ENCODE measurements at regions of chr1 and their contacts with region 1.

Region 1: DNA sequence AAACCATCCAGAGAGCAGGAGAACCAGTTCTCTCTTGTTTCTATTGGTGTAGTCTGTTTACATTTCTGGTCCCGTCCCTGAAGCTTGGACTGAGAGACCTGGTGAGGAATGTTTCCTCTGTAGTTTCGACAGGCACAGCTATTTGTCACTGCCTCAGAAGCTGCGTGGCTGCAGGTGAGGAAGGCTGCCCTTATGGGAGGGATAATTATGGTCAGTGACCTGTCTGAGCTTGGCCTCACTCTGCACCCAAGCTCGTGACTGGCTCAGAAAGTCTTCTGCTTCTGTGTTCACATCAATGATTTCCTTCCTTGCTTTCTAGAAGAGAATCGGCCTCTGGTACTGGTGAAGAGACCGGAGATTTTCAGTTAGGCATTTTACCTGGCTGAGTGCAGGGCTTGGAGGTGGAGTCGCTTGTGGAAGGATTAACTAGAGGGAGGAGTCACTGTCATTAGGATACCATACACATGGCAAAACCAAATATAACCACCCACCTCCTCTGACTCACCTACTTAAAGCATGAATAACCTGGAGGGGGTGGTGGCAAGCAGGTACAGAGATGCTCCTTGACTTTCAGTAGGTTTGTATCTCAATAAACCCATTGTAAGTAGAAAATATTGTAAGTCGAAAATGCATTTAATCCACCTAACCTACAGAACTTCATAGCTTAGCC is 19.9 kb upstream of the WDR26 start:
- DNase-seq: no peak
- H3K4me3 ChIP-seq: no peak overlapping the region
- H3K27ac ChIP-seq: no peak overlapping the region
- H3K4me1 ChIP-seq: peaks cover 21% of the 10 kb centered on the region
- H3K27me3 ChIP-seq: no peaks in the 10 kb centered on the region
- CTCF ChIP-seq: no peak
- POLR2A ChIP-seq: no peak

Region 2: DNA sequence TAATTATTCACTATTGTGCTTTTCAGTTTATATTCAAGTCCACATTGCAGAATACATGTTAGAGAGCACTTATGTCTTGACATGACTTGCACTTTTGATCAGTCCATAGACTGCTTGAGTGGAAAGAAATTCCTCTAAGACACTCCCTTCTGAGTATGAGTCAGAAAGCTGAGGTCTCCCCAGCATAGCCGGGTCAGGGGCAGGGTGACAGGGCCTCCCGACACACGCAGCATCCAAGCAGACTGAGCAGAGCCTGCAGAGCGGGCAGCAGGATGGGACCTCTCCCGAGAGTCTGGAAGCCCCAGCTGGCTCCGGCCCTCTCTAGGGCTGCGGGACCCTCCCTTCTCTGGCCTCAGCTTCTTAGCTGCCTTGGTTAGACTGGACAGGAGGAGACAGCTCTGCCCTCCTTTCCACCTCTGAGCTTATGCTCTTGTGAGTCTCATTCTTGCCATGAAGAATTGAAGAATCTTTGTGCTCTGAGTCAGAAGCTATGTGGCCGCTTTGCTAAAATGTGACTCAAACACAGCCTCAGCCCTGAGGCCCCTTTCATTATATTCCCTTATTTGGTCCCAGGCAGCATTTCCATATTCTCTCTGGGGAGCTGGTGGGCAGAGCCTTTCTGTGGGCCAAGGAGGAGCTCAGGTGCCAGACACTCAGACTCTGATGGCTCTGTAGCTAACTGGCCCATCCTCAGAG is 753.4 kb before region 1 on chr1:
- CTCF ChIA-PET with region 1: interaction called, 4 read pairs
- POLR2A ChIA-PET with region 1: no interaction called
- dilution Hi-C with region 1: no loop called
- intact Hi-C with region 1: loop called (anchors 1 kb)
- DNase-seq: peak; percentile 74
- H3K4me3 ChIP-seq: no peak overlapping the region
- H3K27ac ChIP-seq: peak overlapping the region; percentile 73
- H3K4me1 ChIP-seq: peaks cover 37% of the 10 kb centered on the region
- H3K27me3 ChIP-seq: no peaks in the 10 kb centered on the region
- CTCF ChIP-seq: no peak
- POLR2A ChIP-seq: peak; percentile 26

Region 3: DNA sequence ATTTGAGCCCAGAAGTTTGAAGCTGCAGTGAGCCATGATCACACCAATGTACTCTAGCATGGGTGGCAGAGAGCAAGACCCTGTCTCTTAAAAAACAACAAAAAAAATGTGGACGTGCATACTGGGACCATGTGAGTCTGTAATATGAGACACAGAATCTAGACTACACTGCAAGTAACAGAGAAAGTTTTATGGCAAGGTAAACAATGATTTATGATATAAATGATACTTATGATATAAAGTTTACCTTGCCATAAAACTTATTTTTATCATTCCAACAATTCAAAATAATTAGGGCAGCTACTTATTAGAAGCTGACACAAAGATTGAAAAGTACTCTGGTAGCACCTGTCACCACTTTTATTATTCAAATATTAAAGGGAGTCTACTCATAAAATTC is 54.6 kb before region 1 on chr1:
- CTCF ChIA-PET with region 1: interaction called, 14 read pairs
- POLR2A ChIA-PET with region 1: no interaction called
- dilution Hi-C with region 1: no loop called
- intact Hi-C with region 1: no loop called
- DNase-seq: no peak
- H3K4me3 ChIP-seq: no peak overlapping the region
- H3K27ac ChIP-seq: no peak overlapping the region
- H3K4me1 ChIP-seq: no peaks in the 10 kb centered on the region
- H3K27me3 ChIP-seq: no peaks in the 10 kb centered on the region
- CTCF ChIP-seq: no peak
- POLR2A ChIP-seq: no peak

Region 4: DNA sequence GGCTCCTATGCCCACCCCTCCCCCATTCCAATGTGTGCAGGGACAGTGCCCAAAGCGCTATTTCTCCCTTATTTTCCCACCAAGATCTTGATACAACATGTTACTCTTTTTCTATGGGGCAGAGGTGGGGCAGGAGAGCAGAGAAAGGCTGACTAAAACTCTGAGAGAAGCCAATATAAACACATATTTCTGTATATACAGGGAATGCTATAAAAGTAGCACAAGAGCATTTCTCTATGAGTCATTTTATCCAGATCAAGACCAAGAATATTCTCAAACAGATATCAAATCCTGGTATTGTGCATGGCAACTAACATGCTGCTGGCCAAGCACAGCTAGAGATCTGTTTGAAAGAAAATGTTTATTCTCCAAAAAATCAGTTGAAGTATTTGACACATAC is 27.2 kb before region 1 on chr1:
- CTCF ChIA-PET with region 1: interaction called, 92 read pairs
- POLR2A ChIA-PET with region 1: interaction called, 11 read pairs
- dilution Hi-C with region 1: no loop called
- intact Hi-C with region 1: loop called (anchors 1 kb)
- DNase-seq: peak; percentile 90
- H3K4me3 ChIP-seq: no peak overlapping the region
- H3K27ac ChIP-seq: peak overlapping the region; percentile 39
- H3K4me1 ChIP-seq: peaks cover 43% of the 10 kb centered on the region
- H3K27me3 ChIP-seq: no peaks in the 10 kb centered on the region
- CTCF ChIP-seq: no peak
- POLR2A ChIP-seq: no peak

Region 5: GRCh38 chr1:224497714-224498573 is 43.4 kb after region 1 on chr1:
- CTCF ChIA-PET with region 1: interaction called, 22 read pairs
- POLR2A ChIA-PET with region 1: no interaction called
- dilution Hi-C with region 1: no loop called
- intact Hi-C with region 1: loop called (anchors 1 kb)
- DNase-seq: peak; percentile 89
- H3K4me3 ChIP-seq: peak overlapping the region in 1 of 3 experiments; percentile 20
- H3K27ac ChIP-seq: peak overlapping the region; percentile 94
- H3K4me1 ChIP-seq: peaks cover 30% of the 10 kb centered on the region
- H3K27me3 ChIP-seq: no peaks in the 10 kb centered on the region
- CTCF ChIP-seq: no peak
- POLR2A ChIP-seq: no peak

Region 6: GRCh38 chr1:224565186-224565585 is 110.7 kb after region 1 on chr1:
- CTCF ChIA-PET with region 1: no interaction called
- POLR2A ChIA-PET with region 1: no interaction called
- dilution Hi-C with region 1: no loop called
- intact Hi-C with region 1: no loop called
- DNase-seq: peak; percentile 16
- H3K4me3 ChIP-seq: no peak overlapping the region
- H3K27ac ChIP-seq: peak overlapping the region; percentile 22
- H3K4me1 ChIP-seq: peaks cover 18% of the 10 kb centered on the region
- H3K27me3 ChIP-seq: no peaks in the 10 kb centered on the region
- CTCF ChIP-seq: no peak
- POLR2A ChIP-seq: no peak

Region 7: DNA sequence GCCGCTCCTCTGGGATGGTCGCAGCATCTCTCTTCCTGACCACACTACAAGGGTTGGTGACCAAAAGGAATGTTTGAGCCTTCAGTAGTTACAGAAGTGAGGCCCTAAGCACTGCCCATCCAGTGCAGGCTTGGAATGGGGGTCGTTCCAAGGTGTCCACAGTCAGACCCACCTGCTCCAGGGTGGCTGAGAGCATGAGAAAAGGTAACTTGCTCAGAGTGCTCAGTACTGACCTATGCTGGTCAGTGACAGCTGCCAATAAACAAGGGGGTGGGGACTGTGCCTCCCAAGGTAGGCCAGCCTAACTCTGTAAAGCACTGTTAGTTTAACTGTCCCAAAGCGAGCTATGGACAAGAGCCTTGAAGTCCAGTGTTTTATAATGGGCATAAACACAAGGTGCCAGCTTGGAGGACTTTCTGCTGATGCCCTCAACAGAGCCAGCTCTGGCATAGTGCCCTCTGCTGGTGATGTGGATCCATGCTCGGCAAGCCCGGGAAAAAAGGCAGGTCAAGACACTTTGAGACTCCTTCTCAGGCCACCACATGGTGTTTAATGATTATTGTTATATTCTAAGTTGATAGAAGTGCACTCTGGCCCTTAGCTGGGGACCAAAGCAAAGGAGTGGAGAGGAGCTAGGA is 396.8 kb after region 1 on chr1:
- CTCF ChIA-PET with region 1: interaction called, 12 read pairs
- POLR2A ChIA-PET with region 1: no interaction called
- dilution Hi-C with region 1: no loop called
- intact Hi-C with region 1: no loop called
- DNase-seq: peak; percentile 50
- H3K4me3 ChIP-seq: no peak overlapping the region
- H3K27ac ChIP-seq: no peak overlapping the region
- H3K4me1 ChIP-seq: no peaks in the 10 kb centered on the region
- H3K27me3 ChIP-seq: no peaks in the 10 kb centered on the region
- CTCF ChIP-seq: peak; percentile 75 to 83
- POLR2A ChIP-seq: no peak

Measured in endothelial cell of umbilical vein (primary cell).